Transverse colon (tissue), 4 donors: ENCODE measurements at regions of chr19 and their contacts with region 1.

Region 1: DNA sequence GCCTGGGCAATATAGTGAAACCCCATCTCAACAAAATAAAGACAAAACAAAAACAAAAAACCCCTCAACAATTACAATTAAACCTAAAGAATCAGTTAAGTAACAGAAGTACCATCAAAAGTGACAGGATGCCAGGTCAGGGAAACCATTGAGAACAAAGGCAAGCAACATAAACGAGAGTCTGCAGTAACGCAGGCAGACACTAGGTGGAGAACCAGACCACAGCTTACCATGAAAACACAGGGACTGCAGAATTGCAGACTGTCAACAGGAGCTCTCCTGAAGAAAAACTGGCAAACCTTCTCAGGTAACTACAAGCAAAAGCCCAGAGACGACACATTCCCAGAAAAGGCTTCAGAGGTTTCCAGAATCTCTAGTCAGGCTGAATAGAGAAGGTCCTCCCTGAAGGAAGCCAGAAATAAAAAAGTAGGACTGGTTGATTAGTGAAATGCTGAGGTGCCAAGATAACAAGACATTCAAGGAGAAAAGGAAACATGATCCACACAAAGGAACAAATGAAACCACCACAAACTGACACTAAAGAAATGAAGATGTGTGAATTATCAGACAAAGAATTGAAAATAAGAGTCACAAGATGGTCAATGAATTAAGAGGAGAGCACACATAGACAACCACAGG is 2.2 kb upstream of the ZNF665 start:
- DNase-seq: peak; percentile 84
- H3K4me3 ChIP-seq: no peak overlapping the region
- H3K27ac ChIP-seq: peak overlapping the region in 2 of 4 donors; percentile 10 to 33
- H3K4me1 ChIP-seq: peaks cover 0 to 21% (median 5%) of the 10 kb centered on the region in 4 donors
- H3K27me3 ChIP-seq: no peaks in the 10 kb centered on the region
- CTCF ChIP-seq: peak; percentile 82 to 90 (median 88)
- EP300 ChIP-seq: no peak
- POLR2A ChIP-seq: no peak

Region 2: GRCh38 chr19:53333463-53334449 is 138.4 kb after region 1 on chr19 and contains the start of gene ZNF845:
- in situ Hi-C with region 1: loop called in 1 of 4 experiments (anchors 10 kb)
- intact Hi-C with region 1: no loop called
- DNase-seq: peak; percentile 98
- H3K4me3 ChIP-seq: peak within 1 kb of the TSS; percentile 76 to 97 (median 90)
- H3K27ac ChIP-seq: peak within 1 kb of the TSS; percentile 75 to 89 (median 86)
- H3K4me1 ChIP-seq: peaks cover 0 to 15% (median 7%) of the 10 kb centered on the region in 4 donors
- H3K27me3 ChIP-seq: no peaks in the 10 kb centered on the region
- CTCF ChIP-seq: no peak
- EP300 ChIP-seq: no peak
- POLR2A ChIP-seq: peak; percentile 68
- total RNA-seq, gene ZNF845: 1.6 to 8.4 (median 5.9) TPM

Region 3: GRCh38 chr19:53511933-53512374 is 316.6 kb after region 1 on chr19:
- in situ Hi-C with region 1: loop called in 1 of 4 experiments (anchors 10 kb)
- intact Hi-C with region 1: no loop called
- DNase-seq: peak; percentile 53
- H3K4me3 ChIP-seq: no peak overlapping the region
- H3K27ac ChIP-seq: no peak overlapping the region
- H3K4me1 ChIP-seq: no peaks in the 10 kb centered on the region
- H3K27me3 ChIP-seq: no peaks in the 10 kb centered on the region
- CTCF ChIP-seq: peak; percentile 55 to 60 (median 58)
- EP300 ChIP-seq: no peak
- POLR2A ChIP-seq: no peak